HepG2 (cell line): ENCODE measurements at regions of chr12 and their contacts with region 1.

Region 1: GRCh38 chr12:71007781-71008404 is 87.4 kb upstream of the PTPRR start:
- DNase-seq: no peak
- ATAC-seq: no peak
- H3K4me3 ChIP-seq: no peak overlapping the region
- H3K27ac ChIP-seq: no peak overlapping the region
- H3K4me1 ChIP-seq: no peaks in the 10 kb centered on the region
- H3K27me3 ChIP-seq: no peaks in the 10 kb centered on the region; a peak in 1 of 5 replicates
- CTCF ChIP-seq: no peak
- EP300 ChIP-seq: no peak
- POLR2A ChIP-seq: no peak
- RAD21 ChIP-seq: no peak

Region 2: GRCh38 chr12:70982991-70983390 is 24.9 kb before region 1 on chr12:
- CTCF ChIA-PET with region 1: no interaction called
- POLR2A ChIA-PET with region 1: no interaction called
- in situ Hi-C with region 1: no loop called
- intact Hi-C with region 1: no loop called
- DNase-seq: no peak
- ATAC-seq: no peak
- H3K4me3 ChIP-seq: no peak overlapping the region
- H3K27ac ChIP-seq: no peak overlapping the region
- H3K4me1 ChIP-seq: no peaks in the 10 kb centered on the region
- H3K27me3 ChIP-seq: no peaks in the 10 kb centered on the region
- CTCF ChIP-seq: no peak
- EP300 ChIP-seq: no peak
- POLR2A ChIP-seq: no peak
- RAD21 ChIP-seq: no peak

Region 3: DNA sequence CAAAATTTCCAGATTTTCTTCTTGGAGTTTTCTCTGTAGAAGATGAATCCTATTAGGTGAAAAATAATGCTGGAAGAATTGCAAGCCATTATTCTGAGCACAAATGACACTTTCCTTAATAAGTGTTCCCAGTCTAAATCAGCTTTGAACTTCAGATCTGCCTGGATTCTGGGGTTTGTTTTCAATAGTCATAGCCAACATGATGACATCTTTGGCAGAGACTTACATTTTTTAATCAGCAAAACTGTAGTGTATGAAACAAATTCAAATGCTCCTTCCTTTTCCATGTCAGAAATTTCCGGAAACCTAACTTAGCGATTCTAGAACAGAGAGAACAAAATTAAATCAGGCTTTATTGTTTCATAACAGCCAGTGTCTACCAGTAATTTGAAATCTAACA is 61.4 kb after region 1 on chr12:
- CTCF ChIA-PET with region 1: no interaction called
- POLR2A ChIA-PET with region 1: no interaction called
- in situ Hi-C with region 1: no loop called
- intact Hi-C with region 1: loop called (anchors 10 kb)
- DNase-seq: no peak
- ATAC-seq: no peak
- H3K4me3 ChIP-seq: no peak overlapping the region
- H3K27ac ChIP-seq: no peak overlapping the region
- H3K4me1 ChIP-seq: no peaks in the 10 kb centered on the region
- H3K27me3 ChIP-seq: 0 out of 5 replicates have a peak, but pooled peaks cover 0 to 3% of the 10 kb centered on the region in 2 experiments
- CTCF ChIP-seq: no peak
- EP300 ChIP-seq: no peak
- POLR2A ChIP-seq: no peak
- RAD21 ChIP-seq: no peak

Region 4: GRCh38 chr12:71551529-71551928 is 543.6 kb after region 1 on chr12:
- CTCF ChIA-PET with region 1: no interaction called
- POLR2A ChIA-PET with region 1: no interaction called
- in situ Hi-C with region 1: no loop called
- intact Hi-C with region 1: no loop called
- DNase-seq: no peak
- ATAC-seq: no peak
- H3K4me3 ChIP-seq: no peak overlapping the region
- H3K27ac ChIP-seq: no peak overlapping the region
- H3K4me1 ChIP-seq: peaks cover 48% of the 10 kb centered on the region
- H3K27me3 ChIP-seq: no peaks in the 10 kb centered on the region
- CTCF ChIP-seq: peak; percentile 34
- EP300 ChIP-seq: no peak
- POLR2A ChIP-seq: no peak
- RAD21 ChIP-seq: no peak